Activated CD4-positive, alpha-beta T cell treated with anti-CD3 and anti-CD28 coated beads, Interleukin-2, amount 10 ng/mL, durations not matched to agents 24 days and 14 days (primary cell): ENCODE measurements at regions of chr14 and their contacts with region 1.

Region 1: GRCh38 chr14:105414456-105415371 is 4.9 kb upstream of the MTA1 start:
- DNase-seq: peak; percentile 91
- H3K4me3 Mint-ChIP-seq: peak overlapping the region; percentile 68
- H3K27ac Mint-ChIP-seq: peak overlapping the region; percentile 48
- H3K4me1 Mint-ChIP-seq: peaks cover 10% of the 10 kb centered on the region
- H3K27me3 Mint-ChIP-seq: peaks cover 22% of the 10 kb centered on the region

Region 2: DNA sequence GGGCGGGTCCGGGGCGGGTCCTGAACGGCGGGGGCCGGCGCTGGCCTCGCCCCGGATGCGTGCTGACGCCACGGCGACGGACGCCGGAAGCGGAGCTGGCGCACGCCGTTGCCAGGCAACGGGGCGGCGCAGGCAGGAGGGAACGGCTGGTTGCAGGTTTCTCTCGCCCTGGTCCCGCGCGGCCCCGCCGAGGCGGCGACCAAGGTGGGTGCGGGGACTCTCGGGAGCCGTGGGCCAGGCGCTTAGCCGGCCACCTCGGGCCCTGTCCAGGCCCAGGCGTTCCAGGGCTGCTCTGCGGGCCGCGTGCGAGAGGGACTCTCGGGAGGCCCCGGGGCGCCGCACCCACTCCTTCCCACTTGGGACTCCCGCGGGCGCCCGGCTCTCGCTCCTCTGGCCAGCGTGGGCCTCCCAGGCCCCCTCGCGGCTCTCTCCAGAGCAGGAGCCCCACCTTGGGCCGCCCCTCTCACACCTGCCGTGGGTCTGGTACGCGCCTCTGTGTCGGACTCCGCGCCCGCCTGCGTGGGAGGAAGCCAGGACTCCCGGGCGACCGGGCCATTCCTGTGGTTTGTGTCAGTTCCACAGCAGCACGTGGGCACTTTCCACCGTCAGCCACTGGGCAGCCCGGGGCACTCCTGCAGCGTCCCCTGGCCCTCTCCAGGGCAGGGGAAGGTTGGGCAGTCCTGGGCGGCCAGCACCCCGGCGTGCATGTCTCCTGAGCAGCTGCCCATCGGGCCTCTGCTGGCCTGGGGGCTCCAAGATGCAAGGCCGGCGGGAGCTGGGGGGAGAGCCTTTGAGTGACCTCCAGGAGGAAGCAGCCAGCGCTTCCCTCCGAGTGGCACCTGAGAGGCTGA is 428.8 kb before region 1 on chr14 and contains the start of gene CLBA1:
- intact Hi-C with region 1: loop called (anchors 5 kb)
- DNase-seq: peak; percentile 97
- H3K4me3 Mint-ChIP-seq: peak within 1 kb of the TSS; percentile 75
- H3K27ac Mint-ChIP-seq: peak within 1 kb of the TSS; percentile 75
- H3K4me1 Mint-ChIP-seq: peaks cover 5% of the 10 kb centered on the region
- H3K27me3 Mint-ChIP-seq: peaks cover 3% of the 10 kb centered on the region
- total RNA-seq, gene CLBA1: 2.4 and 2.5 TPM in 2 replicates

Region 3: DNA sequence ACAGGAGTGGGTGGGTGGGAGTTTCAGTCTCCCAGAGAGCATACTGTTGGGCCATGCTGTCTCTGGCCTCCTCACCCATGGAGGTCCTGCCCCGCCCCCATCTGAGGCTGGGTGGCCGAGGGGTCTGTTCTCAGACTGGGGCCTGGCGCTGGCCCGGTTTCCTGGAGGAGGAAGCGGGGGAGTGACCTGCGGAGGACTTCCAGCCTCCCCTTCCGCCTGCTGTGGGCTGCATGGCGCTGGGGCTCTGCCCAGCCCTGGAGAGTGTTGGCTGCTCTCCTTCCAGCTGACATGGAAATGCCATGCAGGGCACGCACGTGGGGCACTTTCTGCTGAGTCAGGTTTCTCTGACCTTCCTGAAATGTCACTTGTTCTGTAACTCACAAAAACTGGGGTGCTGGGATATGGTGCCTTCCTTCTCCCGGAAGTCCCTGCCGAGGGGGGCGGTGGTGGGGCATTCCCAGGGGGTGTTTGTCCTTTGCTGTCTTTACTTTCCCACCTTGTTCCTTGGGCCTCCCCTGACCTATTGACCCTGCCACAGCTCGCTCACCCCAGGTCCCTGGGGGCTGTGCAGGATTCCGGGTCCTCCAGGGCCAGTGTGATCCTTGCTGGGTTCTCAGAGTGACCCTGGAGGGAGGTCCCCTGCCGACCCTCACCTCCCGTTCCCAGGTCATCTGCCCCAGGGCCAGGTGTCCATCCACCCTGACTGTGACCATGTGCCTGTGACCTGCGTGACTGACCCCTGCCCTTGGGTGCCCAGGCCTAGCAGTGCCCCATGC is 76.6 kb before region 1 on chr14:
- intact Hi-C with region 1: no loop called
- DNase-seq: no peak
- H3K4me3 Mint-ChIP-seq: no peak overlapping the region
- H3K27ac Mint-ChIP-seq: no peak overlapping the region
- H3K4me1 Mint-ChIP-seq: no peaks in the 10 kb centered on the region
- H3K27me3 Mint-ChIP-seq: no peaks in the 10 kb centered on the region

Region 4: DNA sequence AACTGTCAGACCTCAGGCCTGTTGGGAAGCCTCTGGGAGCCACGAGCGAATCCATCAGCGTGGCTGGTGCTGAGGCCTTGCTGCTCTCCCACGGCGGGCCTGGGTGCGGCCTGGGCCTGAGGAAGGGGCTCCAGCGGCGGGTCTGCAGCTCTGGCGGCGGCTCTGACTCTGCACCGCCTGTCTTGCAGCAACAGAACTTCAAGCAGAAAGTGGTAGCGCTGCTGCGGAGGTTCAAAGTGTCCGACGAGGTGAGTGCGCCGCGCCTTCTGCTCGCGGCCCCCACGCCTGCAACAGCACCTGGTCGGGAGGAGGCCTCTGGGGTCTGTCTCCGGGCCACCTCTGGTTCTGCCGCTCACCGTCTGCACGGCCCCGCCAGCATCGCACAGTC is 45.1 kb before region 1 on chr14:
- intact Hi-C with region 1: loop called (anchors 2 kb)
- DNase-seq: no peak
- H3K4me3 Mint-ChIP-seq: no peak overlapping the region
- H3K27ac Mint-ChIP-seq: no peak overlapping the region
- H3K4me1 Mint-ChIP-seq: peaks cover 4% of the 10 kb centered on the region
- H3K27me3 Mint-ChIP-seq: no peaks in the 10 kb centered on the region

Region 5: DNA sequence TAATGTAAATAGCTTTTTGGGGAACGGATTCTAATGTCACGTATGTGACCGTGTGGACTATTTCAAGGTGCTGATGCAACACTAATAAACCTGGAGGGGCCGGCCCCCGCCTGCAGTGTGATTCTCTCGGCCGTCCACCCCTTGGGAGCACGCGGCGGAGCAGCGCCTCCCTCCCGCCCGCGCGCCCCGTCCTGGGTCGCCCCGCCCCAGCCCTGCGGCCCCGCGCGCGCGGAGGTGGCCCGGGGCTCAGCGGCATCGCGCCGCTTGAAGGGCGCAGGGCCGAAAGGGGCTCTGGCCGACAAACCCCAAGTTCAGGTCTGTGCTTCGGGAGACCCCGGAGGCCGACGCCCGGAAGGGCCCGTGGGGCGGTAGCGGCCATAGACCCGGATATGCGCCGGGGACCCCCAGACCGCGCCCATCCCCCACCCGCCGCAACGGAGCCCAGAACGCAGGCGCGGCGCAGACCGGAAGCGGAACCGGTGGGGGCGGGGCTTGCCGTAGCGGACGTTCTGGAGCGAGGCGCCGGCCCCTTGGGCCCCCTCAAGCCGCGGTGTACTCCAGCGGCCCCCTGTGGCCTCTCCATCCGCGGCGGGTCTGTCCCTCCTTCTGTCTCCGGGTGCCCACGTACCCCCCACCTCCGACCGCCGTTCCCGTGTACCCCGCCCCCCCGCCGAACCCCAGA is 16.5 kb before region 1 on chr14 and contains the start of gene TEX22:
- intact Hi-C with region 1: loop called (anchors 1 kb)
- DNase-seq: peak; percentile 97
- H3K4me3 Mint-ChIP-seq: peak within 1 kb of the TSS; percentile 93
- H3K27ac Mint-ChIP-seq: peak within 1 kb of the TSS; percentile 96
- H3K4me1 Mint-ChIP-seq: peaks cover 20% of the 10 kb centered on the region
- H3K27me3 Mint-ChIP-seq: no peaks in the 10 kb centered on the region
- total RNA-seq, gene TEX22: 5.7 and 6.4 TPM in 2 replicates

Region 6: GRCh38 chr14:105480952-105481801 is 66.5 kb after region 1 on chr14:
- intact Hi-C with region 1: loop called (anchors 2 kb)
- DNase-seq: peak; percentile 97
- H3K4me3 Mint-ChIP-seq: peak overlapping the region; percentile 78
- H3K27ac Mint-ChIP-seq: peak overlapping the region; percentile 99
- H3K4me1 Mint-ChIP-seq: peaks cover 37% of the 10 kb centered on the region
- H3K27me3 Mint-ChIP-seq: peaks cover 22% of the 10 kb centered on the region

Region 7: DNA sequence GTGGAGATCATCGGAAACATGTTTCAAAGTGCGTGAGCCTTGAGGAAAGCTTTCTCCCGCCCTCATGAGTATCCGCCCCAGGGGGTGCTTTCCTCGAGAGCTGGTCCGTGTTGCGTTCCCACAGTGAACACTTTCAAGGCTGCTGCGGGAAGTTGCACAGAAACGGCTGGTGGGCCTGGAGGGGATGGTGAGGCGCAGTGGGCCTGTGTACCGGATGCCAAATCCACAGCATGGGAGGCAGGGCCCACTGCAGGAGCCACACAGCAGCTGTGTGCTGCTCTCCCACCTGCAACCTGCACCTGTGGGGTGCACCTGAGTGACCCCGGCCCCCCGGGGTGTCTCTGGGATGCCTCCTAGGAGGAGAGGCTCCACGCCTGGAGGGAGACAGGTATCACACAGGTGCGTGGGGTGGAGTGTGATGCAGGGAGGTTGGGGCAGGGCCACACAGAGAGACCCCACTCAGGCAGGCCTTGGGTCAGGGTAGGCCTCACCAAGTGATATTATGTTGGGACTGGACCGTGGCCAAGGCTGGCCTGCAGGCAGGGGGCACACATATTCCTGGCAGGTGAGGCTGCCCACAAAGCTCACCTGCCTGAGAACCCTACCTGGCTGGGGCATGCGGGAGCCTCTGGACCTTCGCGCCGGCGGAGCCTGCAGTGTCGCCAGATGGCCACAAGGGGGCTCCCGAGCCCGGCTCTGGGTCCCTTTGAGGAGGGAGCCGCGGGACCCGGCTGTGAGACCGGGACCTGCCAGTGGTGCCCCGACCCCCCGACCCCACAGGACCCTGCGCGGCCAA is 122.9 kb after region 1 on chr14:
- intact Hi-C with region 1: no loop called
- DNase-seq: peak; percentile 92
- H3K4me3 Mint-ChIP-seq: no peak overlapping the region
- H3K27ac Mint-ChIP-seq: no peak overlapping the region
- H3K4me1 Mint-ChIP-seq: no peaks in the 10 kb centered on the region
- H3K27me3 Mint-ChIP-seq: peaks cover 10% of the 10 kb centered on the region